Motor neuron (in vitro differentiated cells): ENCODE measurements at regions of chr12 and their contacts with region 1.

Region 1: DNA sequence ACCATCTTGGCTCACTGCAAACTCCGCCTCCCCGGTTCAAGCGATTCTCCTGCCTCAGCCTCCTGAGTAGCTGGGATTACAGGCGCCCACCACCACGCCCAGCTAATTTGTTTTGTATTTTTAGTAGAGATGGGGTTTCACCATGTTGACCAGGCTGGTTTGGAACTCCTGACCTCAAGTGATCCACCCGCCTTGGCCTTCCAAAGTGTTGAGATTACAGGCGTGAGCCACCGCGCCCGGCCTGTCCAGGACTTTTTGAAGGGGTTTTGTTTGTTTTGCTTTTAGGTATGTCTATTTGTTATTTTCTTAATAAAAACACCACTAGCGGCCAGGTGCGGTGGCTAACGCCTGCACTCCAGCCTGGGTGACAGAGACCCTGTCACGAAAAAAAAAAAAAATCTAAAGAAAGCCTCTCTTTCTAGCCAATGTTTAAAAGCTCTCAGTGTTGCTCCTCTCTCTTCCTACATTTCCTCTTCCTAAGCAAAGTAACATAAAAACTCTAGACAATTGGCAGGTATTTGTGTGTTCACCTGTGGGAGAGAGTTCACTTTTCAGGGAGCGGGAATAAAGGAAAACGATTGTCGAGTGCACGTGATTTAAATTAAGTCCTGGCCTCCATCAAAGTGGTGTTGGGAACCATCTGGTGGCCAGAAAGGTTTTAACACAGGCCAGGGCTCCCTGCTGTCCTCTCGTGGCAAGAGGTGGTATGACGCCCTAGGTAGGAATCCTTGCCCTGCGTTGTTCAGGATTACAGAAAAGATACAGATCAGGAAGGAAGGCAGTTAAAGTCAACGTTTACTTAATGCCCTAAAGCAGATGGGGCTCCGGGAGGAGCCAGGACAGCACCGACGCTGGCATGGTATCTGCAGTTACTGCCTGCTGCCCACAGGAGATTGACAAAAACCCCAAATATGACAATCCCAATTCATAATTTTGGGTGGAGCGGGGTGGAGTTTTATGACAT is 36.2 kb upstream of the ATP23 start:
- ATAC-seq: peak; percentile 58 to 99 (median 94)
- H3K4me3 ChIP-seq: no peak overlapping the region
- H3K27ac ChIP-seq: no peak overlapping the region
- H3K4me1 ChIP-seq: peaks cover 3% of the 10 kb centered on the region in 2 donors

Region 2: GRCh38 chr12:57352166-57352565 is 553.0 kb before region 1 on chr12:
- in situ Hi-C with region 1: no loop called
- ATAC-seq: no peak
- H3K4me3 ChIP-seq: no peak overlapping the region
- H3K27ac ChIP-seq: no peak overlapping the region
- H3K4me1 ChIP-seq: no peaks in the 10 kb centered on the region

Region 3: DNA sequence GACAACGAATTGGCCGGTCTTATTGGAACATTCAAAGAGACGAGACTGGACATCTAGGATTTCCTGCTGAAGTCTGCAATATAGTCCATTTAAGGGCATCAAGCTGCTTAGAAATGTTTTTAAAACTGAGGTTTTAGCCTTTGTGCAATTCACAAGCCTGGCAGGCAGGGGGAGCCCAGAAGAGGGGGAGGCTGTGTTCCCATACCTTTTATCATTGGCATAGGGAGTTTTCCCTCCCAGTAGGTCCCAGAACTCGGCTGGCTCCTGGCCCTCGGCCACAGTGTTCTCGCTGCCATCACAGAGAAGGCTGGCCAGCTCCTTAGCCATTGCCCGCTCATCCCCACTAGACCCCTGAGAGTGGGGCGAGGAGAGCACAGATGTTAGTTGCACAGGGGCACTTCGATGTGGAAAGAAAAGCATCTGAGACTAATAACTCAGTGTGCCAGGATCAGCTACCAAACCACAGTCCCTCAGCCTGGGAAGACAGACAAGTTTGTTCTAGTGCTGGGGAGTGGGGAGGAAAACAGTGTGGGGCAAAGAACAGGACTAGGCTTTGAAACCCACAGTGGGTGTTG is 101.7 kb before region 1 on chr12:
- in situ Hi-C with region 1: loop called in 6 of 9 experiments (anchors 25 kb)
- ATAC-seq: peak; percentile 40 to 85 (median 58)
- H3K4me3 ChIP-seq: no peak overlapping the region
- H3K27ac ChIP-seq: no peak overlapping the region
- H3K4me1 ChIP-seq: no peaks in the 10 kb centered on the region